Heart left ventricle (tissue), 16 donors: ENCODE measurements at regions of chr3 and their contacts with region 1.

Region 1: DNA sequence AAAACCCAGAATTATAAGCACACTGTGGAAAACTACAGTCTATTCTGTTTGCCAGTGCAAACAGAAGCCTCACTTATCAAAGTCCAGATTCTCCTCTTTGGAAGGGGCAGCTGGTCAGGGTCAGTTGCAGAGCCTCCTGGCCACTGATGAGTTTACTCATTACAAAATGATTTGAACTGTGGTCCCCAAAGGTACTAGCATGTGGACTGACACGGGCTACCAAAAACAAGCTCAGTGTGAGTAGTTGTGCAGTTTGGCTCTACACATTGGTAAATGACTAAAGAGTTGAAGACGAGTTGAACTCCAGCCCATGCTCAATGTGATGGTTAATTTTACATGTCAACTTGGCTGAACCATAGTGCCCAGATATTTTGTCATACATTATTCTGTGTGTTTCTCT is 221.5 kb downstream of the ZIC4 start:
- DNase-seq: no peak
- ATAC-seq: no peak
- H3K4me3 ChIP-seq: no peak overlapping the region
- H3K27ac ChIP-seq: no peak overlapping the region
- H3K4me1 ChIP-seq: no peaks in the 10 kb centered on the region
- H3K27me3 ChIP-seq: no peaks in the 10 kb centered on the region
- CTCF ChIP-seq: no peak
- POLR2A ChIP-seq: no peak

Region 2: GRCh38 chr3:147200545-147200944 is 15.8 kb after region 1 on chr3:
- intact Hi-C with region 1: loop called in 1 of 10 experiments (anchors 1 kb)
- DNase-seq: no peak
- ATAC-seq: no peak
- H3K4me3 ChIP-seq: no peak overlapping the region
- H3K27ac ChIP-seq: no peak overlapping the region
- H3K4me1 ChIP-seq: no peaks in the 10 kb centered on the region
- H3K27me3 ChIP-seq: no peaks in the 10 kb centered on the region
- CTCF ChIP-seq: no peak
- POLR2A ChIP-seq: no peak

Region 3: DNA sequence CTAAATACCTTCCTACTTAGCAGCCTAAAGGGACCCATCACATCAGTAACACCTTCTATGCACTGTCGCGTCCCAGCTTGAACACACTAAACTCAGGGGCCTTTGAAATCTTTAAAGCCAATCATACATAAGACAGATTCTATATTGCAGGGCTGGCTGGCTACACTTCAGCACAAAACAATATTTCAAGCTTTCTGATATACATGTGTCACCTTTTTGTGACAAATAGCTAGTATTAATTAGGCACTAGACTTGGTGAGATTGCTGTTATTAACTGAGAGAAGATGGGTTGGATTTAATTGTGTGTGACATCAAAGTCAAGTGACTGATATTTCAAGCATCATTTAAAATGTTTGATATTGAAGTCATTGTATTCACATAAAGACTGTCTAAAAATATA is 73.2 kb after region 1 on chr3:
- intact Hi-C with region 1: no loop called
- DNase-seq: no peak
- ATAC-seq: no peak
- H3K4me3 ChIP-seq: no peak overlapping the region
- H3K27ac ChIP-seq: no peak overlapping the region
- H3K4me1 ChIP-seq: no peaks in the 10 kb centered on the region
- H3K27me3 ChIP-seq: no peaks in the 10 kb centered on the region
- CTCF ChIP-seq: no peak
- POLR2A ChIP-seq: no peak